Transverse colon (tissue), 4 donors: ENCODE measurements at regions of chr7 and their contacts with region 1.

Region 1: DNA sequence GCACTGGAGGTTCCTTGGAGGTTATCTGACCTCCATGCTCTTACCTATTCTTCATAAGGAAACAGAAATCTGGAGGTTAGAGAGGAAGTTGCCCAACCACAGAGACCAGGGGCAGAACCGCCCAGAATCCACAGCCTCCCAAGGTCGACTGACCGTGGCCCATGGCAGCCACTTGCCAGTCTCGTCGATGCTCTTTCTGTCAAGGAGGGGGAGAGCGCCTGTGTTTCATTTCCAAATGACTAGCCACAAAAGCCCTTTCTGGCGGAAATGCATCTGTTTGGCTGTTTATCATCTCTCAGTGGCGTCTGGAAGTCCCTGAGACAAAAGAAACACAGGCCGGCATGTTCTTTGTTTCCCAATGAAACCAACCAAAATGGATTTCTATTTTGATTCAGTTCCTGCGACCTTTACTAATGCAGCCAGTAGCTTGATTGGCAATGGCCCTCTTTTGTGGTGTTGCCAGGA is 2.9 kb downstream of the RAMP3 start:
- DNase-seq: no peak
- H3K4me3 ChIP-seq: no peak overlapping the region
- H3K27ac ChIP-seq: no peak overlapping the region
- H3K4me1 ChIP-seq: peaks cover 0 to 8% (median 0%) of the 10 kb centered on the region in 4 donors
- H3K27me3 ChIP-seq: peaks cover 21% of the 10 kb centered on the region
- CTCF ChIP-seq: no peak
- EP300 ChIP-seq: no peak
- POLR2A ChIP-seq: no peak

Region 2: DNA sequence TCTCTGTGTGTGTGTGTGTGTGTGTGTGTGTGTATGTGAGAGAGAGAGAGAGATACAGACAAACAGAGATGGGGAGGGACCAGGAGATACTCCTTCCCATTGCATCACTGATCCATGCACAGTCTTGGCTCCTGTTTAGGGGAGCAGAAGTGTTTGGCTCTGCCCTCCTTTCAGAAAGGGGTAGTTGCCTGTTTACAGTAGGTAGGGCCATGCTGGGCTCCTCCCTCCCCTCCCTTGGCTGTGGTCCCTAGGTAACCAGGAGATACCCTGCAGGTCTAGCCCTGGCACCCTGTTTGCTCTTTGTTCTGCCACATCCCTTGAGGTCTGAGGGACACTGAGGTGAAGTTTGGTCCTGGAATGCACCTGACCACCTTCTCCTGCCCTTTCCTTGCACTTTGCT is 92.4 kb after region 1 on chr7:
- in situ Hi-C with region 1: loop called in 3 of 4 experiments (anchors 5 to 10 kb)
- intact Hi-C with region 1: loop called (anchors 5 kb)
- DNase-seq: no peak
- H3K4me3 ChIP-seq: no peak overlapping the region
- H3K27ac ChIP-seq: no peak overlapping the region
- H3K4me1 ChIP-seq: no peaks in the 10 kb centered on the region
- H3K27me3 ChIP-seq: peaks cover 5% of the 10 kb centered on the region
- CTCF ChIP-seq: no peak
- EP300 ChIP-seq: no peak
- POLR2A ChIP-seq: no peak

Region 3: GRCh38 chr7:45259966-45260646 is 99.7 kb after region 1 on chr7:
- in situ Hi-C with region 1: loop called in 2 of 4 experiments (anchors 10 kb)
- intact Hi-C with region 1: loop called (anchors 5 kb)
- DNase-seq: peak; percentile 50
- H3K4me3 ChIP-seq: no peak overlapping the region
- H3K27ac ChIP-seq: no peak overlapping the region
- H3K4me1 ChIP-seq: no peaks in the 10 kb centered on the region
- H3K27me3 ChIP-seq: peaks cover 11% of the 10 kb centered on the region
- CTCF ChIP-seq: peak; percentile 89 to 99 (median 98)
- EP300 ChIP-seq: no peak
- POLR2A ChIP-seq: no peak

Region 4: GRCh38 chr7:45599851-45600706 is 439.6 kb after region 1 on chr7:
- in situ Hi-C with region 1: no loop called
- intact Hi-C with region 1: no loop called
- DNase-seq: no peak
- H3K4me3 ChIP-seq: no peak overlapping the region
- H3K27ac ChIP-seq: no peak overlapping the region
- H3K4me1 ChIP-seq: no peaks in the 10 kb centered on the region
- H3K27me3 ChIP-seq: no peaks in the 10 kb centered on the region
- CTCF ChIP-seq: no peak
- EP300 ChIP-seq: no peak
- POLR2A ChIP-seq: no peak

Region 5: GRCh38 chr7:45872116-45873034 is 711.9 kb after region 1 on chr7:
- in situ Hi-C with region 1: loop called in 2 of 4 experiments (anchors 25 kb)
- intact Hi-C with region 1: no loop called
- DNase-seq: no peak
- H3K4me3 ChIP-seq: no peak overlapping the region
- H3K27ac ChIP-seq: no peak overlapping the region
- H3K4me1 ChIP-seq: no peaks in the 10 kb centered on the region
- H3K27me3 ChIP-seq: no peaks in the 10 kb centered on the region
- CTCF ChIP-seq: peak in 3 of 5 experiments; percentile 12 to 31 (median 15)
- EP300 ChIP-seq: no peak
- POLR2A ChIP-seq: no peak